ENCODE measurements at regions of chr5 and their contacts with region 1.

Region 1: DNA sequence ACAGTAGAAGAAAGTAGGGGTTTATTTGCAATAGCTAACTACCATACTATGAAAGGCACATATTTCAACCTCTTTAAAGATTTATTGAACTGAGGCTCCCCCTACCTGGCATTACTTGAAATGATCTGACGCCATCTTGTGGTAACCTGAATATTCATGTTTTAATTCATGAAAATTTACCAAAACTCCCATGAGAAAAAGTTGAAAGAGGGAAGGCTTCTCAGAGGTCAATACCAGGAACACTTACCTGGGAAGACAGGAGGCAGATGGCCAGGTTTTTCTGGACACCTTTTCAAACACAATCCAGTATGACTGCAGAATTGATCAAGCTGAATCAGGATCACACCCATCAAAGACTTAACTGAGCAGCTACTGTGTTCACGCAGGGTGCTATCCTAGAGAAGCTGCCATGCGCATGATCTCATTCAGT is 9.4 kb downstream of the PRELID2 start:
- DNase-seq: peak; percentile 53
- H3K4me3 ChIP-seq: no peak overlapping the region
- H3K27ac ChIP-seq: no peak overlapping the region
- H3K4me1 ChIP-seq: peaks cover 10 to 16% (median 14%) of the 10 kb centered on the region in 4 donors
- H3K27me3 ChIP-seq: no peaks in the 10 kb centered on the region
- CTCF ChIP-seq: peak; percentile 61 to 69 (median 61)
- EP300 ChIP-seq: no peak
- POLR2A ChIP-seq: no peak

Region 2: GRCh38 chr5:145681686-145682085 is 144.1 kb before region 1 on chr5:
- intact Hi-C with region 1: loop called (anchors 10 kb)
- DNase-seq: no peak
- H3K4me3 ChIP-seq: no peak overlapping the region
- H3K27ac ChIP-seq: no peak overlapping the region
- H3K4me1 ChIP-seq: peaks cover 0 to 18% (median 14%) of the 10 kb centered on the region in 4 donors
- H3K27me3 ChIP-seq: no peaks in the 10 kb centered on the region
- CTCF ChIP-seq: peak; percentile 54 to 67 (median 63)
- EP300 ChIP-seq: no peak
- POLR2A ChIP-seq: no peak

Measured in esophagus muscularis mucosa (tissue), 4 donors.